RWPE1 (cell line): ENCODE measurements at regions of chr1 and their contacts with region 1.

Region 1: DNA sequence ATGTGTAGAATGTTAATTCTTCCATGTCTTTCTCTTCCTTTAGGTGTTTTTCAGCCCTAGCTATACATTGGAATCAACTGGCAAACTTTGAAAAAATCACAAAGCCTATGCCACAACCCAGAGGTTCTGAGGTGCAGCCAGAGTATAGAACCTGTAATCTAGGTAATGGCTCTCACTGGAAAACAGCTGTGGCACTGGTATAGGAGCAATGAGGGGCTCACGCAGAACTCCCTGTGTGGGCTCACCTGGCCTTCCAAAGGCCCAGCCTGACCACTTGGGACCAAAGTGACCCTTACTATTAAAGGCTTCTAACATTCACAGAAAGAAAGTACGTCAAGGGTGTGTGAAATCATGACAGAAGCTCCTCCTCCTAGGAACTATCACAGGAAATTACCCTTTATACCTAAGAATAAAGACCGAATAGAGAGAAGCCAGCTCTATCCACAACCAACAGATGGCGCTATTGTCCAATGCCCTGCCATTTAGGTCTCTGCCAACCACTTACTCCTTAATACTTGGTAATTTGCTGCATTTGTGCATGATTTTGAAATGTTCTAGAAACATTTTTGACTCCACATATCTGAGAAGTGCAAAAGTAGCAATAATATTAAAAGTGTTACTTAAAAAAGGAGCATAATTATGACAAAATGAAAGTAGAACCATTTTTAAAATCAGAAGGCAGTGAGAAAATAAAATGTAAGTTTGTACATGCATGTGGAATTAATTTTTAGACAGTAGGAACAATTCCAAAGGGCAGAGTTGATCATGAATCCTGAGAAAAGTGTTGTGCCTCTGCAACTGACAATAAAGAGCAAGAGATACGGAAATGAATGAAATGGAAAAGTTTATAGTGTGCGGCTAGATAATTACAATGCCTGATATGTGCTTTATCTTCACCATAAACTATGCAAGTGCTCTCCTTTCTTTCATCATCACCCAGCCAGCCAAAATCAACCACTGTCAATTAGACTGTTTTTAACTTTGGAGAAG is 93.1 kb upstream of the HAO2 start:
- DNase-seq: peak; percentile 57
- H3K27ac ChIP-seq: no peak overlapping the region
- CTCF ChIP-seq: peak; percentile 91

Region 2: DNA sequence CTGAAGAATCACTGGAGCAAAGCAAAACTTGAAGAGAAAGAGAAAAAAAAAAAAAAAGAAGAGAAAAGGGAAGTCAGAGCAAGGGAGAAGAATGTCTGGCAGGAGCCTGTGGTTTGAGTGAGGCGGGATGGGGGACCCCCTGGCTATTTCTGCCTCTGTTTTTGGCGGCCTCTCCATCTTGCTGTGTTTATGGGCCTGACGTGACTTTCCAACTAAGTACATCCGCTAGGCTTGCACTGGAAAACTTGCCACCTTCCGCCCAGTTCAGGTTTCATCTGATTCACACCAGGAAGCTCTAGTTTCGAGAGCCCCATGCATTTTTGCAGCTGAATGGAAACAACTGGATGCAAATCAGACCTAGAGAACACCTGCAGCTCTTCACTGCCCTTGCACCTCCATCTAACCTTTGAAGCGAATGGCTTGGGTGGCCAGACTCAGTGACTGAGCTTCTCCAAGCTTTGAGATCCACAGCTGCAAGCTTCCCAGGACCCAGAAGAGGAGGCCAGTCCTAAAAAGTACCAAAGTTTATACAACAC is 315.3 kb before region 1 on chr1:
- CTCF ChIA-PET with region 1: no interaction called
- POLR2A ChIA-PET with region 1: no interaction called
- DNase-seq: no peak
- H3K27ac ChIP-seq: no peak overlapping the region
- CTCF ChIP-seq: no peak

Region 3: GRCh38 chr1:119367427-119368124 is 92.1 kb after region 1 on chr1:
- CTCF ChIA-PET with region 1: interaction called, 10 read pairs
- POLR2A ChIA-PET with region 1: no interaction called
- DNase-seq: peak; percentile 72
- H3K27ac ChIP-seq: no peak overlapping the region
- CTCF ChIP-seq: peak; percentile 88